Left lung (tissue), 14 donors: ENCODE measurements at regions of chr1 and their contacts with region 1.

Region 1: DNA sequence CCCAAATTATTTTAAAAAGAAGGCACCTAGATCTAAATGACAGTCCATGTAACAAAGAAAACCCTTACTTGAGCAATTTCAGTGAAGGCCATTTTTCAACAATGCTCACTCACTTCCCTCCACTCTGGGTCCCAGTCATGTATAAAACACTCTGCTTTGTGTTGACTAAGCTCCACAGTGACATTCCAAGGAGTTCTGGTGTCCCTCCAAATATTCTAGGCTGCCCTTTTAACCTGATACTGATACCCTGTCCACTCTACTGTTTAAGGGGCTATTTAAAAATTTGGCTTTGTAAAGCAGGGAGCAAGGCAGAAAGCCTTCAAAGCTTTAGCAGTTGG is 73.6 kb downstream of the GNG12 start:
- DNase-seq: no peak
- ATAC-seq: peak; percentile 44
- H3K4me3 ChIP-seq: no peak overlapping the region
- H3K27ac ChIP-seq: peak overlapping the region in 1 of 2 donors; percentile 41
- H3K4me1 ChIP-seq: peaks cover 9 to 19% of the 10 kb centered on the region in 2 donors
- H3K27me3 ChIP-seq: peaks cover 0 to 8% of the 10 kb centered on the region in 2 donors
- CTCF ChIP-seq: no peak

Region 2: DNA sequence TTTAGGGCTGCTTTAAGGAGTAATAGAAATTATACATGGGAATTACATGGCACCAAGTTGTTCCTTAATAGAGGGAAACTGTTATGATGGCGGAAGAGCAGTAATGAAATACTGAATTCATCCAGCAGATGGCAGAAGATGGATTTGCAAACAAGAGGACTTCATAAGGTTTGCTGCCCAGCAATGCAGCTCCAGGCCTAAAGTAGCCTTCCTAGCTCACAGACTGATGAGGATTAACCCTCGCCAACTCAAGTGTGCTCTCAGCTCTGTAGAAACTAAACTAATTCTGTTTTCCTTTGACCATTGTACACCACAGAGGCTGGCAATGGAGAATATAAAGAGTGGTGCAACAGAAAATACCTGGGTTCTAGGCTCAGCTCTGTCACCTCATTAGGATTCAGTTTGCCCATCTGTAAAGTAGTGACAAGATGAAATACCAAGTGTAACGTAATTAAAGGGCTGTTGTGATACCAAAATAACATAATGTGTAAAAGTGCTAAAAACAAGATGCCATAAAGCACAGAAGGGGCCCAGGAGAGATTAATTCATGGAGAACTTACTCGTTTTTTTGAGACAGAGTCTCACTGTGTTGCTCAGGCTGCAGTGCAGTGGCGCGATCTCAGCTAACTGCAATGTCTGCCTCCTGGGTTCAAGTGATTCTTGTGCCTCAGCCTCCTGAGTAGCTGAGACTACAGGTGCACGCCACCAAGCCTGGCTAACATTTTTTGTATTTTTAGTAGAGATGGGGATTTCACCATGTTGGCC is 227.0 kb before region 1 on chr1:
- intact Hi-C with region 1: loop called in 1 of 2 experiments (anchors 5 kb)
- DNase-seq: peak in 2 of 4 donors; percentile 68 to 84
- ATAC-seq: peak; percentile 57
- H3K4me3 ChIP-seq: no peak overlapping the region
- H3K27ac ChIP-seq: no peak overlapping the region
- H3K4me1 ChIP-seq: peaks cover 0 to 9% of the 10 kb centered on the region in 2 donors
- H3K27me3 ChIP-seq: no peaks in the 10 kb centered on the region
- CTCF ChIP-seq: peak; percentile 63 to 65

Region 3: DNA sequence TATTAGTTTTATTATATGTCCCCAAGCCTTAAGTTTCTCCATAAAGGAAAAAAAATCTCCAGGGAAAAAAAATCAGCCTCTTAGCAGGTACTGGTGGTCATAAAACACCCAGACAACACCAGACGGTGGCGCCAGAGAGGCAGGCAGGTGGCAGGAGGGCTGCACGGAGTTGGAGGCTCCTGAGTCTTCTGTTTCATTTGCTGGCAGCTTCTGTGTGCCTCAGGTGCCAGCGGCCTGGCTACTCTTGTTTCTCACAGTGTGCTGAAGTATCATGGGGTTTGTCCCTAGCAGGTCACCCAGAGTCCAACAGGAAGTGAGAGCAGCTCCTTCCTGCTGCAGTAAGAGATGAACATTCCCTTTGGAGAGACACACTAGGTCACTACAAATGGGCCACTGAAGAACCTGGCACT is 198.0 kb before region 1 on chr1:
- intact Hi-C with region 1: loop called in 1 of 2 experiments (anchors 5 kb)
- DNase-seq: peak in 3 of 4 donors; percentile 78 to 95 (median 92)
- ATAC-seq: peak; percentile 93
- H3K4me3 ChIP-seq: no peak overlapping the region
- H3K27ac ChIP-seq: no peak overlapping the region
- H3K4me1 ChIP-seq: peaks cover 3 to 34% of the 10 kb centered on the region in 2 donors
- H3K27me3 ChIP-seq: no peaks in the 10 kb centered on the region
- CTCF ChIP-seq: peak; percentile 73 to 86

Region 4: DNA sequence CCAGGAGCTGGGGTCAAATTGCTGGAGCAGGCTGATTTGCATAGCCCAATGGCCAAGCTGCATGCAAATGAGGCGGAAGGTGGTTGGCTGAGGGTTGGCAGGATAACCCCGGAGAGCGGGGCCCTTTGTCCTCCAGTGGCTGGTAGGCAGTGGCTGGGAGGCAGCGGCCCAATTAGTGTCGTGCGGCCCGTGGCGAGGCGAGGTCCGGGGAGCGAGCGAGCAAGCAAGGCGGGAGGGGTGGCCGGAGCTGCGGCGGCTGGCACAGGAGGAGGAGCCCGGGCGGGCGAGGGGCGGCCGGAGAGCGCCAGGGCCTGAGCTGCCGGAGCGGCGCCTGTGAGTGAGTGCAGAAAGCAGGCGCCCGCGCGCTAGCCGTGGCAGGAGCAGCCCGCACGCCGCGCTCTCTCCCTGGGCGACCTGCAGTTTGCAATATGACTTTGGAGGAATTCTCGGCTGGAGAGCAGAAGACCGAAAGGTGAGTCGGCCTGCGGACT is 74.5 kb before region 1 on chr1 and contains the start of gene GADD45A:
- intact Hi-C with region 1: loop called in 1 of 2 experiments (anchors 5 kb)
- DNase-seq: peak; percentile 96 to 100 (median 99)
- ATAC-seq: peak; percentile 91
- H3K4me3 ChIP-seq: peak within 1 kb of the TSS; percentile 86 to 98
- H3K27ac ChIP-seq: peak within 1 kb of the TSS; percentile 94 to 97
- H3K4me1 ChIP-seq: peaks cover 12 to 56% of the 10 kb centered on the region in 2 donors
- H3K27me3 ChIP-seq: no peaks in the 10 kb centered on the region
- CTCF ChIP-seq: peak in 1 of 2 donors; percentile 20
- polyA plus RNA-seq, gene GADD45A: 25.3 to 37.1 (median 30.1) TPM